Activated naive CD4-positive, alpha-beta T cell treated with anti-CD3 and anti-CD28 coated beads for 36 hours (primary cell): ENCODE measurements at regions of chr16 and their contacts with region 1.

Region 1: DNA sequence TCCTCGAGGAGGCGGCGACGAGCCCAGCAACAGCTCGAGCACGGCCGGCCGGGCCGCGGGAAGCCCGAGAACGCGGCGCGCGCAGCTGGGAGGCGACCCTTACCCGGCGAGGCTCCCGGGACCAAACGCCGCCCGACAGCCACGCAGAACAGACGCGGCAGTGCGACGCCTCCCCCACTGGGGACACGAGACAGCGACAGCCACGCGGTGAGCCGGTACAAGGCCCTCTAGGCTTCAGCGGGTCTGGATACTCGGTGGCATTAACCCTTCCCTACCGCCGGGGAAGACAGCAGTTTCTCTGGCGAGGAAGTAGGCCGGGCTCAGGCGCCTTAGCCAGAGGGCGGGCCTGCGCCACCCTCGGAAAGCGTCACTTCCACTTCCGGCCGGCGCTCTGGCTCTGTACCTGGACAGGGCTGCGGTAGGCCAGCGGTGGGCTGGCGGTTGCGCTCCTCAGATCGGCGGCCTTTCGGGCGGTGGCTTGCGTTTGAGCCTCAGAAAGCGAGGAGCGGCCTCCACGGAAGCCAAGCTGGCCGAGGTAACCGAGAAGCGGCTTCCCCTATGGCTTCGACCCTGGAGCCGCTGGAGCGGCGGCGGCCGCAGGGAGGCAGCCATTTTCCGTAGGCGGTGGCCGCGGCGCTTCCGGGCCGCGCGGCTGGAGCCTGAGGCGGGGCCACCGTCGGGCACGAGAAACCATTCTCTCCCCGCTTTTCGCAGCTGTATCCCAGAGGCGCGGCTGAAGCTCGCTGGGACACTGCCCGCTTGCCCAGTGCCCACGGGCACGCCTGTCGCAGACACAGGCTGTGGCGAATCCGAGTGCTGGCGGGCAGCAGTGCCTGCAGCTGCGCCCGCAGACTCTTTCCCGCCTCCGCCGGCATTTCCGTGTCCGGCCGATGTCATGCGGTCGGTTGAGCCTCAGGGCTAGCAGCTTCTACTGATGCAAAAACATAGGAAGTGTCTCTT is at the starts of genes TIGD7 and ZNF75A:
- DNase-seq: peak; percentile 84
- H3K4me3 Mint-ChIP-seq: peak within 1 kb of the TSS; percentile 79
- H3K27ac Mint-ChIP-seq: peak within 1 kb of the TSS; percentile 77
- H3K4me1 Mint-ChIP-seq: peaks cover 21% of the 10 kb centered on the region
- H3K27me3 Mint-ChIP-seq: no peaks in the 10 kb centered on the region
- total RNA-seq, gene TIGD7: 3.8 to 4.1 TPM
- total RNA-seq, gene ZNF75A: 10.5 to 12.4 TPM

Region 2: GRCh38 chr16:3182608-3183444 is 122.6 kb before region 1 on chr16:
- CTCF ChIA-PET with region 1: no interaction called
- intact Hi-C with region 1: loop called (anchors 5 kb)
- DNase-seq: peak; percentile 72
- H3K4me3 Mint-ChIP-seq: peak overlapping the region; percentile 81
- H3K27ac Mint-ChIP-seq: peak overlapping the region; percentile 81
- H3K4me1 Mint-ChIP-seq: peaks cover 24% of the 10 kb centered on the region
- H3K27me3 Mint-ChIP-seq: peaks cover 61% of the 10 kb centered on the region

Region 3: DNA sequence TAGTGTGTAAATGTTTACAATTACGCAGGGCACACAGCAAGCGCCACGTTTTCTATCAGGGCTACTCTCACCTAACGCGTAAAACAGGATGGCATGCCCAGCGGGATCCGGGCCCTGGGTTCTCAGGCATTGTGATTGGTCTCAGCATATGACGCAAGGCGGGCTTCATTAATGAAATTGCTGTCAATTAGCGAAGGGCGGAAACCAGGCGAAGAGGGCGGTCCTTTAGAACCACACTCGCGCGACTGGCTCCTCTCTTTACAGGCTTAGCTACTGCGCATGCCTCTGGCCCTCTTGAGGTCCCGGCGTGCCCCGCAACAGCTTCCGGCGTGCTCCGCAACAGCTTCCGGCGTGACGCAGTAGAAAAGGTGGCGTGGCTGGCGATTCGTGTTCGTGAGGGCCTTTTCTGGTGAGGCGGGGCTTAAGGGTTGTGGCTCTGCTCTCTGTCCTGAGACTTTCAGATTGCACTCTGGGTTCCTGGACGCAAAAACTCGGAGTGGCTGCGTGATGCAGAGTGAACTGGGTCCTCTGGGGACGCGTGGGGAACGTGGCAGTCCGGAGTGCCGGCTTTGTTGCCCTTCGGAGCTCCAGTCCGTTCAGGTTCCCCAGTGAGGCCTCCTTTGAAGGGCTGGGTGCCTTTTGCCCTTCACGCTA is 59.5 kb after region 1 on chr16:
- CTCF ChIA-PET with region 1: no interaction called
- intact Hi-C with region 1: loop called (anchors 1 kb)
- DNase-seq: peak; percentile 91
- H3K4me3 Mint-ChIP-seq: peak overlapping the region; percentile 78
- H3K27ac Mint-ChIP-seq: peak overlapping the region; percentile 79
- H3K4me1 Mint-ChIP-seq: peaks cover 10% of the 10 kb centered on the region
- H3K27me3 Mint-ChIP-seq: peaks cover 3% of the 10 kb centered on the region

Region 4: GRCh38 chr16:3431779-3432219 is 126.4 kb after region 1 on chr16:
- CTCF ChIA-PET with region 1: no interaction called
- intact Hi-C with region 1: loop called (anchors 5 kb)
- DNase-seq: peak; percentile 73
- H3K4me3 Mint-ChIP-seq: peak overlapping the region; percentile 53
- H3K27ac Mint-ChIP-seq: no peak overlapping the region
- H3K4me1 Mint-ChIP-seq: peaks cover 18% of the 10 kb centered on the region
- H3K27me3 Mint-ChIP-seq: no peaks in the 10 kb centered on the region